SK-N-SH (cell line): ENCODE measurements at regions of chr19 and their contacts with region 1.

Region 1: DNA sequence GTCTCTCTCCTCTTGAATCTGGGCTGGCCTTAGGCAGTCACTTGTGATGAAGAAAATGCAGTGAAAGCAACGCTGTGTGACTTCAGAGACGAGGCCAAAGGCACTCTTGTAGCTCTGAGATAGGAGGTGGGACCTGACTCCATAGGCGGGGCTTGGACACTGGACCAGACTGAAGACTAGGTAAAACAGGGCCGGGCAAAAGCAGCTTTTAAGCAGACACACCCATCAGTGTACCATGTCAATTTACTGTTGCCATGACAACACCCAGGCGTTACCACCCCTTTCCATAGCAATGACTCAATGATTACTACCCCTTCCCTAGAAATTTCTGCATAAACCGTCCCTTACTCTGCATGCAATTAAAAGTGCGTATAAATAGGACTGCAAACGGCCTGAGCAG is 6.6 kb upstream of the EID2 start:
- DNase-seq: no peak
- H3K4me3 ChIP-seq: no peak overlapping the region
- H3K27ac ChIP-seq: no peak overlapping the region
- H3K4me1 ChIP-seq: no peaks in the 10 kb centered on the region
- H3K27me3 ChIP-seq: peaks cover 23% of the 10 kb centered on the region; the same call in 1 of the 2 replicates
- CTCF ChIP-seq: no peak
- EP300 ChIP-seq: no peak
- RAD21 ChIP-seq: no peak

Region 2: DNA sequence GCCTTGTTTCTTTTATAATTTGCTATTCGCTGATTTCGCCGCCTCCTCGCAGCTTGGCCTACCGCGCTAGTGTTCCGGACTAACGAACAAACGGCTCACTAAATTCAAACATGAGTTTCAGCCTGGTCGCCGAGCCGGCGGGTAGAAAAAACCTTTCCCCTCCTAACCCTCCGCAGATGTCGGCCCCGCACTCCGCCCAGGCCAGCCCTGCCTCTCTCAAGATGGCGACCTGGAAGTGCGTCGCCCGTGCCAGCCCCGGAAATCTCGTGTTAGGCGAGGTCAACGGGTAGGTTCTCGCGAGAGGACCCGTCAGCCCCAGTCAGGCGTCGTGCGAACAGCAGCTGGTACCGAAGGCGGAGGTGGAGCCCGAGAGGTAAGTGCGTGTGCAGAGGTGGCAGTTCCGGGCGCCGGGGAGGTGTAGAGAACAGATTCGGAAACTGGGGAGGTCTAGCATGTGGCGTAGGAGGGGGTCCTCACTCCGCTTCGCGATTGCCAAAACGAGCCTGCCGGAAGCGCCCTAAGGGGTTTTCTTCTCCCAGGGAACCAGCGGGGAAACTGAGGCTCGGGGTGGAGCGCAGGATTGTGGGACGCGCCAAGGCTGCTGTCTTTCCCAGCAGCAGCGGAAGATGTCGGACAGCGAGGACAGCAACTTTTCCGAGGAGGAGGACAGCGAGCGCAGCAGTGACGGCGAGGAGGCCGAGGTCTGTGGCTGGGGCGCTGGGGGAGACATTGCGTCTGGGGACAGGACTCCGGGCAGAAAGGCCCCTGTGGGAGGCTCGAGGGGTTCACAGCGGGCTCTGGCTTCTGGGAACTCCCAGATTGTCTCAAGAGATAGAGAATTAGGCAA is 101.1 kb before region 1 on chr19 and contains the start of gene SUPT5H:
- CTCF ChIA-PET with region 1: interaction called, 10 read pairs
- POLR2A ChIA-PET with region 1: no interaction called
- DNase-seq: peak; percentile 96
- H3K4me3 ChIP-seq: peak within 1 kb of the TSS; percentile 71 to 93
- H3K27ac ChIP-seq: peak within 1 kb of the TSS; percentile 83 to 96
- H3K4me1 ChIP-seq: peaks cover 4 to 12% of the 10 kb centered on the region in 2 experiments; a peak in 3 of 4 replicates
- H3K27me3 ChIP-seq: no peaks in the 10 kb centered on the region
- CTCF ChIP-seq: no peak
- EP300 ChIP-seq: no peak
- RAD21 ChIP-seq: no peak
- polyA plus RNA-seq, gene SUPT5H: 115 and 137 TPM in 2 replicates

Region 3: DNA sequence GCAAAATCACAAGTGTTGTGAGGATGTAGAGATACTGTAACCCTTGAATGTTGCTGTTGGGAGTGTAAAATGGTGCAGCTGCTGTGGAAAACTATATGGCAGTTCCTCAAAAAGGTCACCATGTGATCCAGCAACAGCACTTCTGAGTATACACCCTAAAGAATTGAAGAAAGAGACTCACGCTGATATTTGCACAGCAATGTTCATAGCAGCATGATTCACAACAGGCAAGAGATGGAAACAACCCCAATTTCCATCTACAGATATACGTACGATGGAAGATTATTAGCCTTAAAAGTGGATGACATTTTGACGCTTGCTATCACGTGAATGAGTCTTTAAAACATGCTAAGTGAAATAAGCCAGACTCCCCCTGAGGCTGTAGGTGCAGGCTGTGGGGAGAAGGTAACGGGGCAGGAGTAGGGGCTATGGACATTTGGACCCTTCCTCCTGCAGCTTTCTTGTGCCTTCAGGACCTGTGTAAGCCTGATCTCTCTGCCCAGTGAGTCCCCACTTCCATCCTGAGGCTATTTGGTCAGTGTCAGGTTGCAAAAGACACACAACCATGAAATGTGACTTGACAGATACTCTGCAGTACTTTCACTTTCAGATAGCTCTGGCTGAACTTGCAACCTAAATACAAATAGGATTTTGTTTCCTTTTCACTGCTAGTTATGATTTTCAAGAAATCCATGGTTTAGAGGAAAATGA is 11.0 kb after region 1 on chr19:
- CTCF ChIA-PET with region 1: interaction called, 21 read pairs
- POLR2A ChIA-PET with region 1: no interaction called
- DNase-seq: no peak
- H3K4me3 ChIP-seq: peak overlapping the region; percentile 2 to 31; a peak in 2 of 4 replicates
- H3K27ac ChIP-seq: no peak overlapping the region
- H3K4me1 ChIP-seq: peaks cover 0 to 3% of the 10 kb centered on the region in 2 experiments; a peak in 1 of 4 replicates
- H3K27me3 ChIP-seq: peaks cover 5% of the 10 kb centered on the region; the same call in 1 of the 2 replicates
- CTCF ChIP-seq: no peak
- EP300 ChIP-seq: no peak
- RAD21 ChIP-seq: no peak

Region 4: DNA sequence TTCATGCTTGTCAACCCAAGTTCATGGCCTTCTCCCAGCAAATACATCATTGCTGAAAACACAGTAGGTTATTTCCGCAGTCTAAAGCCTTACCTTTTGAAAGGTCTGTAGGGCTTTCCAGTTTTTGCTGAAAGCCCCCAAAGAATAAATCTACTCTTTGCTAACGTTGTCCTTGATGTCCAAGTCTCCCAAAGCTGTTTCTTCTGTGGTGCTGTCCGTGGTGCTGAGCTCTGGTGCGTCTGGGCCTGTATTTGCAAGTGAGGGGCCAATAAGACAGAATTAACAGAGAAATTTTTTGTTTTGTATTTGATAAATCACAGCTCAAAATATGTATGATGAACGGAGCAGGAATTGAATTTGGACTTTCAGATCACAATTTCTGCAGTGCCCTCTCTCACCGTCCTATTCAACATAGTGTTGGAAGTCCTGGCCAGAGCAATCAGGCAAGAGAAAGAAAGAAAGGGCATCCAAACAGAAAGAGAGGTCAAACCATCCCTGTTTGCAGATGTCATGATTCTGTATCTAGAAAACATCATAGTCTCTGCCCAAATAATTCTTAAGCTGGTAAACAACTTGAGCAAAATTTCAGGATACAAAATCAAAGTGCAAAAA is 99.3 kb after region 1 on chr19:
- CTCF ChIA-PET with region 1: no interaction called
- POLR2A ChIA-PET with region 1: no interaction called
- DNase-seq: no peak
- H3K4me3 ChIP-seq: no peak overlapping the region
- H3K27ac ChIP-seq: no peak overlapping the region
- H3K4me1 ChIP-seq: no peaks in the 10 kb centered on the region
- H3K27me3 ChIP-seq: no peaks in the 10 kb centered on the region
- CTCF ChIP-seq: no peak
- EP300 ChIP-seq: no peak
- RAD21 ChIP-seq: no peak

Region 5: DNA sequence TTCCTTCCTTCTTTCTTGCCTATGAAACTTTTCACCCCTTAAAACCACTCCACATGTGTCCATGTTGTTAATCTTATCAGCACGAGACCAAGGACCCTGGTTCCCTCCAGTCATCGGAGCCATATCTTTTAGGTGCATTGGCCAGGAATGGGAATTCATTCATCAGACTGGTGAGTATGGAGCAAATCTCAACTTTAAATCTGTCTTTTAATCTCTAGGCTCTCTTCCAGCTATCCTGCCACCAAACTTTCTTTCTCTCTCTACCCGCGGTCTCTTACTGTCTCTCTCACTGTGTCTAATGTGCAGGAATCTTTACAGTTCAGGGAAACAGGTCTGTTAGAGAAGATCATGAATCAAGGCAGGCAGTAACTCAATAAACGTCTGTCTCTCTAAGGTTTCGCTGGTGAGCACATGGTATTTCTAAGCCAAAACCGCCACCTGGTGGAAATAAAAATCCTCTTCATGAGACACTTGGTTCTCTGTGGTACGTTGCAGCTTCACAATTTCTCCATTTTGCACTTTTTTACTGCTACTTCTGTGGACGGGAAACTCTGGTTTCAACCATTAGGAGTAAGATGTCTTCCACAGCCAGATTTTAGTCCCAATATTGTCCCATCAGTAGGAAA is 125.3 kb after region 1 on chr19:
- CTCF ChIA-PET with region 1: interaction called, 51 read pairs
- POLR2A ChIA-PET with region 1: no interaction called
- DNase-seq: peak; percentile 34
- H3K4me3 ChIP-seq: no peak overlapping the region
- H3K27ac ChIP-seq: no peak overlapping the region
- H3K4me1 ChIP-seq: no peaks in the 10 kb centered on the region
- H3K27me3 ChIP-seq: peaks cover 7% of the 10 kb centered on the region; the same call in 1 of the 2 replicates
- CTCF ChIP-seq: peak; percentile 61
- EP300 ChIP-seq: no peak
- RAD21 ChIP-seq: peak; percentile 84